GM10248 (cell line): ENCODE measurements at regions of chr6 and their contacts with region 1.

Region 1: GRCh38 chr6:87929843-87930288 is 117.8 kb upstream of the SPACA1 start:
- DNase-seq: peak; percentile 75
- CTCF ChIP-seq: peak; percentile 91

Region 2: DNA sequence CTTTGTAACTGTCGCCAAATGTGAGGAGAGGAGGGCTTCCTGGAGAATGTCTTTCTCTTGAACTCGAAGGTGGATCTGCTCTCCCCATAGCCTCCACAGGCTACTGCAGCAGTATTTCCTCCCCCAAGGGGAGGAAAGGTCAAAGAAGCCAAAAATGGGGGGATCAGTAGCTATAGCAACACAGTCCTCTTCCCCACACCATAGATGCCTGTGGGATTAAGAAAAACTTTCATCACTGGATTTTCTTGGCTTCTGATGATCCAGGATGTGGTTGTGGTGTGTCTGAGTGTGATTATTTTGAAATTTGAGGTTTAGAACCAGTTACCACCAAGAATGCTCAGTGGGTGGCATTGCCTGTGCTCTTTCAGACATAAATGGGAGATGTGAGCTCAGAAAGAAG is 22.3 kb before region 1 on chr6:
- CTCF ChIA-PET with region 1: interaction called, 15 read pairs
- POLR2A ChIA-PET with region 1: no interaction called
- DNase-seq: no peak
- CTCF ChIP-seq: no peak

Region 3: DNA sequence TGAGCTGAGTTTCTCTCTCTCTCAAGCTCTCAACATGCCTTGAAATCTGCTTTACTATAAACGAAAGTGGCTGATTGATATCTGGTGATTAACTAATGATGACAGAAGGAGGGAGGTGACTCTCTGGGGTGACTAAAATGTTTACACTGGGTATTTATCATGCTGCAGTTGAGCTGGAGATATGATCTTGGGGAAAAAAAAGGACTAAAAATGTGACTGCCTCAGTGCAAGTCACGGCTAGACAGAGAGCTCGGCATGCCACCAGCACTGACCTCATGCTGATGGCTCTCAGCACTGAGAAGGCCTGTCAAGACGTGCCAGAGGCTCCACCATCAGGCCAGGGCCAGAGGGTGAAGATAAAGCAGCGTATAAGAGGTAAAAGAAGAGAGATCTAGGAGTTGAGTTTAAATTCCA is 14.7 kb after region 1 on chr6:
- CTCF ChIA-PET with region 1: interaction called, 63 read pairs
- POLR2A ChIA-PET with region 1: no interaction called
- DNase-seq: no peak
- CTCF ChIP-seq: peak; percentile 17

Region 4: GRCh38 chr6:88238065-88238464 is 308.2 kb after region 1 on chr6:
- CTCF ChIA-PET with region 1: interaction called, 33 read pairs
- POLR2A ChIA-PET with region 1: no interaction called
- DNase-seq: peak; percentile 61
- CTCF ChIP-seq: peak; percentile 62

Region 5: GRCh38 chr6:88870717-88871330 is 941.0 kb after region 1 on chr6:
- CTCF ChIA-PET with region 1: interaction called, 40 read pairs
- POLR2A ChIA-PET with region 1: no interaction called
- DNase-seq: peak; percentile 15
- CTCF ChIP-seq: peak; percentile 60